CD4-positive, alpha-beta T cell (primary cell): ENCODE measurements at regions of chr1 and their contacts with region 1.

Region 1: GRCh38 chr1:43946236-43947060 is at the start of gene IPO13:
- DNase-seq: peak; percentile 91 to 97 (median 94)
- ATAC-seq: peak; percentile 96
- H3K4me3 ChIP-seq: peak within 1 kb of the TSS; percentile 94
- H3K4me3 Mint-ChIP-seq: peak within 1 kb of the TSS; percentile 91
- H3K27ac ChIP-seq: peak within 1 kb of the TSS; percentile 93 to 94
- H3K27ac Mint-ChIP-seq: peak within 1 kb of the TSS; percentile 91
- H3K4me1 ChIP-seq: peaks cover 36% of the 10 kb centered on the region
- H3K4me1 Mint-ChIP-seq: peaks cover 63% of the 10 kb centered on the region
- H3K27me3 ChIP-seq: no peaks in the 10 kb centered on the region
- H3K27me3 Mint-ChIP-seq: no peaks in the 10 kb centered on the region
- CTCF ChIP-seq: peak; percentile 65
- total RNA-seq, gene IPO13: 6.3 to 7.4 TPM

Region 2: DNA sequence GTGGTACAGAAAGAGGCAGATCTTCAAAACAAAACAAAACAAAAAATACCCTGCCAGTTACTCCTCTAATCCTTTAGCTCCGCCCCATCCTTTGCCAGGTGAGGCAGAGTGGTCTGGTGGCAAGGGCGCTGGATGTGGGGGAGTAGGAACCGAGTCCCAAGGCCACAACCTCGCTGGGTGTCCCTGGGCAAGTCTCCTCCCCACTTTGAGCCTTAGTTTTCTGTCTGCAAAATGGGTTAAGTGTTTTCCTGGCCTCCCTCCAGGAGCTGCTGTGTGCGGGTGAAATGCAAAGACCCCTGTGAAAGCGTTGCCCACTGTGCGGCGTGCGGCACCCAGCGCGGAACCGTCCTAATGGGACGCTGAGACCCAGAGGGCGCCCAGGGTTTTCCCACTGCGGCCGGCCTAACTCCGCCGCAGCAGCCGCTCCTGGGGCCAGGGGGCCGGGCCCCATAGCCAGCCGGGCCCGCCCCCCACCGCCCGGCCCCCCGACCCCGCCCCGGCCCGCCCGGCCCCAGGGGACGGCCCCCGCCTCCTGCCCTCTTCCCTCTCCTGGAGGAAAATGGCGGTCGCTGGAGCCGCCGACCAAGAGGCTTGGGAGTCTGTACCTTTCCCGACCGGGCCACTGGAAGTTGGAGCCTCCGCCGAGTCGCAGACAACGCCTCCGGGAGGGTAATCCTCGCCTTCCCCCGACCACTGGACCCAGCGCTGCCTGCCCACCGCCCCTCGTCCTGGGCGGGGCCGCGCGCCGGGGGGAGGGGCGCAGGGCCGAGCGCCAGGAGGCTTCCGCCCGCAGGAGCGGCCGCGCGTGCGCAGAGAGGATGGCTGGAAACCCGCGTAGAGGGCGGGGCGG is 1129.6 kb before region 1 on chr1 and contains the starts of genes ERMAP and SVBP:
- CTCF ChIA-PET with region 1: no interaction called
- POLR2A ChIA-PET with region 1: no interaction called
- intact Hi-C with region 1: loop called in 1 of 2 experiments (anchors 10 kb)
- DNase-seq: peak; percentile 86 to 98 (median 94)
- ATAC-seq: peak; percentile 88
- H3K4me3 ChIP-seq: peak within 1 kb of the TSS; percentile 78
- H3K4me3 Mint-ChIP-seq: peak within 1 kb of the TSS; percentile 96
- H3K27ac ChIP-seq: peak within 1 kb of the TSS; percentile 77 to 79
- H3K27ac Mint-ChIP-seq: peak within 1 kb of the TSS; percentile 89
- H3K4me1 ChIP-seq: peaks cover 10% of the 10 kb centered on the region
- H3K4me1 Mint-ChIP-seq: peaks cover 27% of the 10 kb centered on the region
- H3K27me3 ChIP-seq: no peaks in the 10 kb centered on the region
- H3K27me3 Mint-ChIP-seq: no peaks in the 10 kb centered on the region
- CTCF ChIP-seq: no peak
- total RNA-seq, gene ERMAP: 4.4 to 5.0 TPM
- total RNA-seq, gene SVBP: 19.2 to 21.3 TPM

Region 3: DNA sequence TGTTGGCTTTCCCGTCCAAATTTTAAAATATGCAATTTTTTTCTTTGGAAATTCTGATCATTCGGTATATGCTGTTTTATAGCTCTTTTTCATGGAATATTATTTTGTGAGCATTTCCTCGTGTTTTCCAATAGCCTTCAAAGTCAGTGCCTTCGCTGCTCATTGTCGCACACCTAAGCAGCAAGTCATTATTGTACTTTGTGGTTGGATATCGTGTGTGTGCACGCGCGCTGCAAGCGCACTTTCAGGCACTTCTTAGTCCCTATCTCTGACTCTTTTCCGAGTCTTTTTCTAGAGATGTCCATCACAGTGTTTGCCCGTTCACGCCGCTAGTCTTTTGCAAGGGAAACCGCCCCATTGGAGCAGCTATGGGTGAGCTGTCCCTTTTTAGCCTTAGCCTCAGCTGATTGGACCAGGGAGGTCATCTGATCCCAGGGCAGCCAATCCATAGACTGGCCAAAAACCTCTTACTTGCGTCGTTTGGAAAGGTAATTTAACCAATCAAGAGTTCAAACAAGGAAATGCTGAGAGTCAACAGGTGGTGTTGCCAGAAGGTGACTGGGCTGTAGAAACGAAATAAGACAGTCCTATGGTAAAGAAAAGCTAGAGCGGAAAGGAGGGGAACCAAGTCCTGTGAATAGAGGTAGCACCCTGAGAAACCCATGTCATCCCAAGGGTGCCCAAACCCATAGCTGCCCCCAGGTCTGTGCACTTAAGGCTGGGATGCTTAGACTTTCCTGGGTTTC is 492.0 kb before region 1 on chr1:
- CTCF ChIA-PET with region 1: no interaction called
- POLR2A ChIA-PET with region 1: no interaction called
- intact Hi-C with region 1: loop called in 1 of 2 experiments (anchors 10 kb)
- DNase-seq: peak in 13 of 14 experiments; percentile 23 to 84 (median 44)
- ATAC-seq: peak; percentile 75
- H3K4me3 ChIP-seq: peak overlapping the region; percentile 65
- H3K4me3 Mint-ChIP-seq: peak overlapping the region; percentile 88
- H3K27ac ChIP-seq: no peak overlapping the region
- H3K27ac Mint-ChIP-seq: peak overlapping the region; percentile 85
- H3K4me1 ChIP-seq: peaks cover 18% of the 10 kb centered on the region
- H3K4me1 Mint-ChIP-seq: peaks cover 20% of the 10 kb centered on the region
- H3K27me3 ChIP-seq: peaks cover 0 to 6% of the 10 kb centered on the region in 2 experiments
- H3K27me3 Mint-ChIP-seq: peaks cover 12% of the 10 kb centered on the region
- CTCF ChIP-seq: no peak

Region 4: GRCh38 chr1:43706598-43707495 is 239.6 kb before region 1 on chr1:
- CTCF ChIA-PET with region 1: no interaction called
- POLR2A ChIA-PET with region 1: interaction called, 3 read pairs
- intact Hi-C with region 1: loop called (anchors 1 to 5 kb)
- DNase-seq: peak; percentile 82 to 95 (median 88)
- ATAC-seq: peak; percentile 99
- H3K4me3 ChIP-seq: peak overlapping the region; percentile 82
- H3K4me3 Mint-ChIP-seq: peak overlapping the region; percentile 91
- H3K27ac ChIP-seq: peak overlapping the region in 1 of 2 donors; percentile 43
- H3K27ac Mint-ChIP-seq: peak overlapping the region; percentile 73
- H3K4me1 ChIP-seq: peaks cover 19% of the 10 kb centered on the region
- H3K4me1 Mint-ChIP-seq: peaks cover 28% of the 10 kb centered on the region
- H3K27me3 ChIP-seq: no peaks in the 10 kb centered on the region
- H3K27me3 Mint-ChIP-seq: no peaks in the 10 kb centered on the region
- CTCF ChIP-seq: no peak

Region 5: GRCh38 chr1:43934101-43934985 is 12.1 kb before region 1 on chr1:
- CTCF ChIA-PET with region 1: interaction called, 24 read pairs
- POLR2A ChIA-PET with region 1: no interaction called
- intact Hi-C with region 1: no loop called
- DNase-seq: peak in 13 of 14 experiments; percentile 18 to 69 (median 40)
- ATAC-seq: peak; percentile 65
- H3K4me3 ChIP-seq: no peak overlapping the region
- H3K4me3 Mint-ChIP-seq: peak overlapping the region; percentile 48
- H3K27ac ChIP-seq: no peak overlapping the region
- H3K27ac Mint-ChIP-seq: no peak overlapping the region
- H3K4me1 ChIP-seq: peaks cover 33% of the 10 kb centered on the region
- H3K4me1 Mint-ChIP-seq: peaks cover 15% of the 10 kb centered on the region
- H3K27me3 ChIP-seq: peaks cover 35 to 41% of the 10 kb centered on the region in 2 experiments
- H3K27me3 Mint-ChIP-seq: peaks cover 36% of the 10 kb centered on the region
- CTCF ChIP-seq: peak; percentile 68

Region 6: DNA sequence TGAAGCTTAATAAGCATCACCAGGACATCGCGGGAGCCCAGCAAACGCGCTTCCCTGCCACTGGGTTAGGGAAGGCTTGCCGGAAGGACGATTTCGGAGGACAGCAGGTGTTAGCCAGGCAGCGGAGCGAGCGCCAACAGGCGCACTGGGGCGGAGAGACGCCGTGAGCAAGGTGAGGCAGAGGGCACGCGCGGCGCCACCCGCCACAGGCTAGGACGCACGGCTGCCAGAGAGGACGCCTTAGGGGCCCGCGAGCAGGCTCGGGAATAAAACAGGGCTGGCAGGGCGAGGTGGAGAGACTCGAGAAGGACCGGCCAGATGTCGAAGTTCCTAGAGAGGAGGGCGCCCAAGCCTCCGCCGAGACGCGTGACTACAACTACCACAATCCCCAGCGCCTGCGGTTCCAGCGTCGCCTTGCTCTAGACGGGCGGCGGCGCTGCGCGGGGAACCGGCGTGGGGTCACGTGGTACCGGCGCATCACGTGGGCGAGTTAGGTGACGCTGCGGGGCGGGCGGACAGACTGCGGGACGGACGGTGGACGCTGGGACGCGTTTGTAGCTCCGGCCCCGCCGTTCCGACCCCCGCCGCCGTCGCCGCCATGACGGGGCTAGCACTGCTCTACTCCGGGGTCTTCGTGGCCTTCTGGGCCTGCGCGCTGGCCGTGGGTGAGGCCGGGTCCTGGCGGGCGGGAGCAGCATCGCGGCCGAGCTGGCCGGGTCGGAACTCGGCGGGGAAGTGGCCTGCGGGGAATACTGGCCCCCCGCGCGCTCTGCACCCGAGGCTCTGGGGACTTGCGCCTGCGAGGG is 28.2 kb after region 1 on chr1 and contains the start of gene ATP6V0B:
- CTCF ChIA-PET with region 1: interaction called, 6 read pairs
- POLR2A ChIA-PET with region 1: interaction called, 7 read pairs
- intact Hi-C with region 1: loop called (anchors 1 kb)
- DNase-seq: peak; percentile 85 to 96 (median 91)
- ATAC-seq: peak; percentile 72
- H3K4me3 ChIP-seq: peak within 1 kb of the TSS; percentile 99
- H3K4me3 Mint-ChIP-seq: peak within 1 kb of the TSS; percentile 96
- H3K27ac ChIP-seq: peak within 1 kb of the TSS; percentile 78 to 86
- H3K27ac Mint-ChIP-seq: peak within 1 kb of the TSS; percentile 92
- H3K4me1 ChIP-seq: peaks cover 61% of the 10 kb centered on the region
- H3K4me1 Mint-ChIP-seq: peaks cover 68% of the 10 kb centered on the region
- H3K27me3 ChIP-seq: peaks cover under 1% of the 10 kb centered on the region in 2 experiments
- H3K27me3 Mint-ChIP-seq: peaks cover under 1% of the 10 kb centered on the region
- CTCF ChIP-seq: no peak
- total RNA-seq, gene ATP6V0B: 42.9 to 47.0 TPM

Region 7: GRCh38 chr1:44029906-44030604 is 83.6 kb after region 1 on chr1:
- CTCF ChIA-PET with region 1: no interaction called
- POLR2A ChIA-PET with region 1: no interaction called
- intact Hi-C with region 1: loop called in 1 of 2 experiments (anchors 1 kb)
- DNase-seq: peak; percentile 65 to 92 (median 82)
- ATAC-seq: peak; percentile 79
- H3K4me3 ChIP-seq: peak overlapping the region; percentile 76
- H3K4me3 Mint-ChIP-seq: peak overlapping the region; percentile 93
- H3K27ac ChIP-seq: peak overlapping the region in 1 of 2 donors; percentile 48
- H3K27ac Mint-ChIP-seq: peak overlapping the region; percentile 82
- H3K4me1 ChIP-seq: peaks cover 21% of the 10 kb centered on the region
- H3K4me1 Mint-ChIP-seq: peaks cover 34% of the 10 kb centered on the region
- H3K27me3 ChIP-seq: no peaks in the 10 kb centered on the region
- H3K27me3 Mint-ChIP-seq: no peaks in the 10 kb centered on the region
- CTCF ChIP-seq: no peak